ENCODE measurements at regions of chrX and their contacts with region 1.

Region 1: GRCh38 chrX:153649178-153649914 is 2.3 kb downstream of the DUSP9 start:
- H3K4me3 ChIP-seq: no peak overlapping the region
- H3K27ac ChIP-seq: no peak overlapping the region
- H3K4me1 ChIP-seq: no peaks in the 10 kb centered on the region
- CTCF ChIP-seq: no peak

Region 2: DNA sequence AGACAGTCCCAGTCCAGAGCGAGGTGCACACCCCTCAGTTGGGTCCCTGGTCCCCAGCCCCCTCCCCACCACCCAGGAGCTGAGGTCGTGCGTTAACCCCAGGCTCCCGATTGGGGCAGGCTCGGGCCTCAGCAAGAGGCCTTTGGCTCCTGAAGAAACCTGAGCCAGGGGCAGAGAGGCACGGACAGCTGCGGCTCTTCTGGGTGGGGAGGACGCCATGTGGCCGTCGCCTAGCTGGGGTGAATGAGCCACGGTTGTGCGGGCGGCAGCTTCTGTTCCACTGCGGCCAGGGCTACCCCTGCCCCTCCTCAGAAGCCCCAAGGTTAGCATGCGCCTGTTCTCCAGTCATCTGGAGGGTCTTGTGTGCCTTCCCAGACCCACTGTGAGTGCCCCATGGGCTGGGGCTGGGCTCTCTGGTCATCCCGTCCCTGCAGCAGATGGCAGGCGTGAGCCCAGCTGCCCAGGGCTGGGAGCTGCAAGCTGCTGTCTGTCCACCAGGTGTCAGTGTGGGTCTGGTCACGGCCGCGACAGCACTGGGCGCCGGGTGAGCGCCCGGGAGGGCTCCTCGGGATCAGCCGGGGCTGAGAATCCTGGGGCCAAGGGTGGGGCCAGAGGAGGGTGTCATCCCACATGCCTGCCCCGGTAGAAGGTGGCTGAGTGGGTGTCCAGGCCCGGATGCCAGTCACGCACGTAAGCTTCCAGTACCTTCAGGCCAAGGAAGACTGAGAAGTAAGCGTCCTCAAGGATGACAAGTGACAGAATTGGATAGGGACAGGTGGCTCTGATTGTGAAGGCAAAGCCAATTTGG is 110.0 kb before region 1 on chrX:
- CTCF ChIA-PET with region 1: interaction called, 15 read pairs
- POLR2A ChIA-PET with region 1: no interaction called
- H3K4me3 ChIP-seq: no peak overlapping the region
- H3K27ac ChIP-seq: no peak overlapping the region
- H3K4me1 ChIP-seq: no peaks in the 10 kb centered on the region
- CTCF ChIP-seq: peak; percentile 99

Region 3: GRCh38 chrX:153609917-153610428 is 39.4 kb before region 1 on chrX:
- CTCF ChIA-PET with region 1: interaction called, 17 read pairs
- POLR2A ChIA-PET with region 1: no interaction called
- H3K4me3 ChIP-seq: peak overlapping the region; percentile 10
- H3K27ac ChIP-seq: no peak overlapping the region
- H3K4me1 ChIP-seq: no peaks in the 10 kb centered on the region
- CTCF ChIP-seq: peak; percentile 74

Region 4: DNA sequence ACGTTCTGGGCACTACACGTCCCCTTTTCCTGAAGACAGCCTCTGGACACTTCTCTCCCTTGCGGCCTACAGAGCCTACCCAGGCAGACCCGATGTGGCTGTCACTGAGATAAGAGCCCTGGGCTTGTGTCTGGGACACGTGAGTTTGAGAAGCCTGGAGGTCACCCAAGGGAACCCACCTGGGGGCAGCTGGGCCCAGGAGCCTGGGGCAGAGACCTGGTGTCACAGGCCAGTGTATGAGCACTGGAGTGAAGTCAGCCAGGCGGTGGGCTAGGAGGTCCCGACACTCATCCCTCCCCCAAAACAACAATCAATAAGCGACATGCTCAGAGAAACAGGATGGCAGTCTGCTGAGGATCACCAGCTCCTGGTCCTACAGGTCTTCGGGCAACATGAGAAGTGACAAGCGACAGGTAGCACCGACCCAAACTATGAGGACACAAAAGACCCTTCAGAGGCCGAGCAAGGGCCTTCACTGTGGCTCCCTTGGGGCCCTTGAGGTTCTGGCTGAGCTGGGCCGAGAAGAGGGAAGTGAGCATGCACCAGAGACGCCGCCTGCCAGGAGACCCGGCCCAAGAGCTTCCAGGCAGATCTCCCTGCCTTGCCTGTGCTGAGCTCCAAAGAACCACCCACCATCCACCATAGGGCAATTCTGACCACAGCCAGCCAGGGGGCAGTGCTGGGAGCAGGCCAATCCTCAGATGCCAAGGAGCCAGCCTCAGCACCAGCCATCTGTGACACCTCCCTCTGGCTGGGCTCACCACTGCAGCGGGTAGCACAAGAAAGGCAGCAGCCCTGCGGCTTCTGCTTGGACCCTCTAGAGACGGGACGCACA is 13.3 kb before region 1 on chrX:
- CTCF ChIA-PET with region 1: interaction called, 10 read pairs
- POLR2A ChIA-PET with region 1: no interaction called
- H3K4me3 ChIP-seq: no peak overlapping the region
- H3K27ac ChIP-seq: no peak overlapping the region
- H3K4me1 ChIP-seq: no peaks in the 10 kb centered on the region
- CTCF ChIP-seq: peak; percentile 73

Region 5: DNA sequence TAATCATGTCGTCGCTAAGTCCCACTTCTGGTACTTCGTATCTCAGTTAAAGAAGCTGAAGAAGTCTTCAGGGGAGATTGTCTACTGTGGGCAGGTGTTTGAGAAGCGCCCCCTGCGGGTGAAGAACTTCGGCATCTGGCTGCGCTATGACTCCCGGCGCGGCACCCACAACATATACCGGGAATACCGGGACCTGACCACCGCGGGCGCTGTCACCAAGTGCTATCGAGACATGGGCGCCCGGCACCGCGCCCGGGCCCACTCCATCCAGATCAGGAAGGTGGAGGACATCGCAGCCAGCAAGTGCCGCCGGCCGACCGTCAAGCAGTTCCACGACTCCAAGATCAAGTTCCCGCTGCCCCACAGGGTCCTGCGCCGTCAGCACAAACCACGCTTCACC is 12.9 kb after region 1 on chrX:
- CTCF ChIA-PET with region 1: interaction called, 39 read pairs
- POLR2A ChIA-PET with region 1: no interaction called
- H3K4me3 ChIP-seq: no peak overlapping the region
- H3K27ac ChIP-seq: no peak overlapping the region
- H3K4me1 ChIP-seq: no peaks in the 10 kb centered on the region
- CTCF ChIP-seq: no peak

Region 6: GRCh38 chrX:153735274-153735673 is 85.9 kb after region 1 on chrX:
- CTCF ChIA-PET with region 1: no interaction called
- POLR2A ChIA-PET with region 1: no interaction called
- H3K4me3 ChIP-seq: no peak overlapping the region
- H3K27ac ChIP-seq: no peak overlapping the region
- H3K4me1 ChIP-seq: no peaks in the 10 kb centered on the region
- CTCF ChIP-seq: no peak